PC-3 (cell line): ENCODE measurements at regions of chr20 and their contacts with region 1.

Region 1: DNA sequence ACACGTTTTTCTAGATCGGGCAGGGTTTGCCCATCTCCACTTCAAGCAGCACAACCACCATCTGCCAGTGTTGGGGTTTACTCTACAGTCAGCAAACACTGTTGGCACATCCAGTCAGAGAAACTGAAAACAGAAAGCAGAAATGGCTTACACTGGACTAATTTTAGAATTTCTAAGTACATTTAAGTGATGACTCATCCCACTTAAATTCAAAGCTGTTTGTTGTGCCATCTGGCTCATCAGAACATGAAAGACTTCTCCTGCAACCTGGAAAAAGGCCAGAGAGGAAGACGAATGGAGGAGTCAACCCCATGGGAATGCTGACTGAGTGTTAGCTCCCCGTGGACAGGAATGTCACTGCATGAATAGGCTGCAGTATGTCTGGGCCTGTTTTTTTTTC is 21.8 kb downstream of the FAM209B start:
- DNase-seq: peak; percentile 99
- ATAC-seq: peak; percentile 92
- H3K4me3 ChIP-seq: peak overlapping the region; percentile 8; the same call in 1 of the 2 replicates
- H3K27ac ChIP-seq: peak overlapping the region; percentile 42
- H3K4me1 ChIP-seq: peaks cover 15% of the 10 kb centered on the region
- H3K27me3 ChIP-seq: no peaks in the 10 kb centered on the region
- CTCF ChIP-seq: 0 out of 2 replicates have a peak, but pooled peaks have one; percentile 17

Region 2: DNA sequence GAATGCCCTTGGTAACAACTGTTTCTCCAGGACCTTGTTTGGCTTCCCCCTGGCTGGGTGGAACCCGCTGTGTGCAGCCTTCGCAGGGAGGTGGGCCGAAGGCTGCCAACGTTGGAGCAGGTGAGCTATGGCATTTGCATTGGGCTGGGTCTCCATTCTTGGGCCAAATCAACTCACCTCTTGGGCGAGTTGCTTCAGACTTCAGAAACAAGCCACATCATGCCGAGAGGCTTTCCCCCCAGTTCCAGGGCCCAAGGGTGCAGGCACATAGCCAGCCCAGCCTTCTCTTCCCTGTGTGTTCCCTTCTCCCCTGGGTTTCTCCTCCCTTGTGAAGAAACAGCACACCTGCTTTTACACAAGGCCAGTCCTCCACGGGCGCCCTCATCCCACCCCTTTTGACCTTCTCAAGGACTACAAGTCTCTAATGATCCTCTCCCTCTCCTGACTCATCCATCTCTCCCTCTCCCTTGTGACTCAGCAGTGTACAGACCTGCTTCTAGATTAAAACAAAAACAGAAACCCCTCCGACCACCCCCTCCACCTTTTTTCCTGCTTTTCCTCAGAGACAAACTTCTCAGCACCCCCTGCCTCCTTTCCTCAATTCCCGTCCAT is 19.8 kb after region 1 on chr20:
- CTCF ChIA-PET with region 1: interaction called, 7 read pairs
- POLR2A ChIA-PET with region 1: interaction called, 3 read pairs
- intact Hi-C with region 1: loop called (anchors 1 kb)
- DNase-seq: peak; percentile 45
- ATAC-seq: peak; percentile 51; the same call in 1 of the 2 replicates
- H3K4me3 ChIP-seq: no peak overlapping the region
- H3K27ac ChIP-seq: no peak overlapping the region
- H3K4me1 ChIP-seq: peaks cover 9% of the 10 kb centered on the region
- H3K27me3 ChIP-seq: no peaks in the 10 kb centered on the region
- CTCF ChIP-seq: no peak

Region 3: DNA sequence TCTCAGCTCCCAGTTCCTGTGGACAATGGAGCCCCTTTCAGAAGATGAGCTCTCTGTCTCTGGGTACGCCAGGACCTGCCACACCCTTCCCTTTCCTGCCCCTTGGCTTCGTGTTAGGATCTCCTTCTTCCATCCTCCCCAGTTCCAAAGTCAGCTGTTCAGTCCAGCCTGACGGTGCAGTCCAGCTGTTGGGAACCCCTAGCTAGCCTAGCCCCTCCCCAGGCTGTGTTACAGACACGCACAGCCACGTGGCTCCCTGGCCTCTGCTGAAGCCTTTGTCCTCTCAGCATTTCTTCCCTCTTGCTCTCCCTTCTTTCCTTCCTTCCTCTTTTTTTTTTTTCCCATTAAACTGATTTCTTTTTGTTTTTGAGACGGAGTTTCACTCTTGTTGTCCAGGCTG is 61.8 kb after region 1 on chr20:
- CTCF ChIA-PET with region 1: no interaction called
- POLR2A ChIA-PET with region 1: no interaction called
- intact Hi-C with region 1: no loop called
- DNase-seq: no peak
- ATAC-seq: no peak
- H3K4me3 ChIP-seq: no peak overlapping the region
- H3K27ac ChIP-seq: no peak overlapping the region
- H3K4me1 ChIP-seq: no peaks in the 10 kb centered on the region
- H3K27me3 ChIP-seq: no peaks in the 10 kb centered on the region
- CTCF ChIP-seq: no peak

Region 4: GRCh38 chr20:56885521-56885920 is 330.7 kb after region 1 on chr20:
- CTCF ChIA-PET with region 1: no interaction called
- POLR2A ChIA-PET with region 1: no interaction called
- intact Hi-C with region 1: no loop called
- DNase-seq: no peak
- ATAC-seq: no peak
- H3K4me3 ChIP-seq: no peak overlapping the region
- H3K27ac ChIP-seq: no peak overlapping the region
- H3K4me1 ChIP-seq: no peaks in the 10 kb centered on the region
- H3K27me3 ChIP-seq: no peaks in the 10 kb centered on the region
- CTCF ChIP-seq: no peak

Region 5: GRCh38 chr20:56974499-56975236 is 419.8 kb after region 1 on chr20:
- CTCF ChIA-PET with region 1: interaction called, 8 read pairs
- POLR2A ChIA-PET with region 1: no interaction called
- intact Hi-C with region 1: loop called (anchors 1 kb)
- DNase-seq: peak; percentile 92
- ATAC-seq: peak; percentile 90
- H3K4me3 ChIP-seq: peak overlapping the region; percentile 48
- H3K27ac ChIP-seq: no peak overlapping the region
- H3K4me1 ChIP-seq: peaks cover 8% of the 10 kb centered on the region; the same call in 1 of the 2 replicates
- H3K27me3 ChIP-seq: no peaks in the 10 kb centered on the region
- CTCF ChIP-seq: peak; percentile 98

Region 6: DNA sequence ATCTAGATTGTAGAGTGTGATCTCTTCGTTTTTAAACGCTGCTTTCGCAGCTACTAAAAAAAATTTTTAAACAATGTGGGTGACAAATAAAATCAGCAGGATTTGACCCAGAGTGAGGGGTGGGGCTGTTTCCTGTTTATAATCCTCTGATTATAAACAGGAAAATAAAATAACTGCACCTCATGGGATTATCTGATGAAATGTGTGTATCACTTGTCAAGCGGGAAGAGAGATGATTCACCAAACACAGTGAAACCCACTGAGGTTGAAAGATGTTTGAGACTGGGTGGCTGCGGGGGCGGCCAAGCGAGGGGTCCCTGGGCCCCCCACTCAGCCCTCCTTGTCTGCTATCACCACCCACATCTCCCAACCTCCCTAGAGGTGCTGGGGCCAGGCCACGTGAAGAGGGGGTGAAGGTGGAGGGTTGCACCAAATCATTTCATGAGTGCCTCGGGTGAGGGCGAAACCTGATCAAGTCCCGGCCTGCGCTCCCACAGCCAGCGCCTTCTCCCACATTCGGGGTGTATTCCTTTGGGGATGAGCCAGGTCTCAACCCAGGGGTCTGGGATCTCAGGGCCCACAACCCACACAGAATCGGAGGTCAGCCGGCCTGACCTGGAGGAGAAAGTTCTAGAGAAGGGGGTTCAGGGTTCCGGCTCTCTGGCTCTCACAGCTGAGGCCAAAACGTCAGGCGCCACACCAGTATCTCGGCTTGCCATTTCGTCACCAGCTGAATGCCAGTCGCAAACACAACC is 499.1 kb after region 1 on chr20:
- CTCF ChIA-PET with region 1: no interaction called
- POLR2A ChIA-PET with region 1: interaction called, 14 read pairs
- intact Hi-C with region 1: no loop called
- DNase-seq: no peak
- ATAC-seq: no peak
- H3K4me3 ChIP-seq: no peak overlapping the region
- H3K27ac ChIP-seq: no peak overlapping the region
- H3K4me1 ChIP-seq: peaks cover 13% of the 10 kb centered on the region
- H3K27me3 ChIP-seq: no peaks in the 10 kb centered on the region
- CTCF ChIP-seq: no peak

Region 7: DNA sequence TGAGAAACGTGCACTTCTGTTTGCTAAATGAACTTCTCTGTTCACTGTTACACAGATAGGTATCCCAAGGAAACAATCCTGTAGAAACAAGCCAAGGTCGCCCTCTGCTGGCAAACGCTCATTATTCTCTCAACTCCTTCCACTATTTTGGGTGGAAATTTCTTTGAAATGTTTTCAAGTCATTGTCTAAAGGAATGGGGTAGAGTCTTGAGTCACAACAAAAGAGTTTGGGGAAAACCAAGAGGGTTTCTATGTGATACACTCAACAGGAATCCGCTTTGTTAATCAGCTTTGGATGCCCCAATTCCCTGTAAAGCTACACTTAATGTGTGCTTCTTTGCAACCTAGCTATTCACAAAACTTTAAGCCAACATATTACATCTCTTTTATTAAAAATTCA is 791.6 kb after region 1 on chr20:
- CTCF ChIA-PET with region 1: no interaction called
- POLR2A ChIA-PET with region 1: no interaction called
- intact Hi-C with region 1: loop called (anchors 10 kb)
- DNase-seq: peak; percentile 94
- ATAC-seq: peak; percentile 57
- H3K4me3 ChIP-seq: no peak overlapping the region
- H3K27ac ChIP-seq: no peak overlapping the region
- H3K4me1 ChIP-seq: peaks cover 11% of the 10 kb centered on the region
- H3K27me3 ChIP-seq: 0 out of 2 replicates have a peak, but pooled peaks cover under 1% of the 10 kb centered on the region
- CTCF ChIP-seq: peak; percentile 97